ENCODE measurements at regions of chr3 and their contacts with region 1.

Region 1: GRCh38 chr3:47522082-47522987 is 8.8 kb upstream of the ELP6 start:
- DNase-seq: peak; percentile 71
- H3K4me3 Mint-ChIP-seq: no peak overlapping the region
- H3K27ac Mint-ChIP-seq: peak overlapping the region; percentile 55
- H3K4me1 Mint-ChIP-seq: peaks cover 11% of the 10 kb centered on the region
- H3K27me3 Mint-ChIP-seq: no peaks in the 10 kb centered on the region

Region 2: GRCh38 chr3:47594792-47595191 is 72.5 kb after region 1 on chr3:
- intact Hi-C with region 1: no loop called
- DNase-seq: no peak
- H3K4me3 Mint-ChIP-seq: no peak overlapping the region
- H3K27ac Mint-ChIP-seq: no peak overlapping the region
- H3K4me1 Mint-ChIP-seq: no peaks in the 10 kb centered on the region
- H3K27me3 Mint-ChIP-seq: no peaks in the 10 kb centered on the region

Region 3: DNA sequence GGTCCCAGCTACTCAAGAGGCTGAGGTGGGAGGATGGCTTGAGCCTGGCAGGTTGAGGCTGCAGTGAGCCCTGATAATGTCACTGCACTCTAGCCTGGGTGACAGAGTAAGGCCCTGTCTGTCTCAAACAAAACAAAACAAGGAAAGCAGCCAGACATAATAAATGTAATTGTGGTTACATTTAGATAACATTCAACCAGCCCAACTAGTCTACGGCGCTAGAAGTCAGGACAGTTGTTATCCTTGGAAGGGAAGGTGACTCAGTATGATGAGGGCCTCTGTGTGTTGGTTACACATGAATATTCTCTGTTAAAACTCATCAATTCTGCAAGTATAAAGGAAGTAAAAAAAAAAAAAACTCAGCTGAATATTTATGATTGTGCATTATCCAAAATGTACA is 83.3 kb after region 1 on chr3:
- intact Hi-C with region 1: no loop called
- DNase-seq: no peak
- H3K4me3 Mint-ChIP-seq: no peak overlapping the region
- H3K27ac Mint-ChIP-seq: no peak overlapping the region
- H3K4me1 Mint-ChIP-seq: peaks cover 5% of the 10 kb centered on the region
- H3K27me3 Mint-ChIP-seq: no peaks in the 10 kb centered on the region

Region 4: DNA sequence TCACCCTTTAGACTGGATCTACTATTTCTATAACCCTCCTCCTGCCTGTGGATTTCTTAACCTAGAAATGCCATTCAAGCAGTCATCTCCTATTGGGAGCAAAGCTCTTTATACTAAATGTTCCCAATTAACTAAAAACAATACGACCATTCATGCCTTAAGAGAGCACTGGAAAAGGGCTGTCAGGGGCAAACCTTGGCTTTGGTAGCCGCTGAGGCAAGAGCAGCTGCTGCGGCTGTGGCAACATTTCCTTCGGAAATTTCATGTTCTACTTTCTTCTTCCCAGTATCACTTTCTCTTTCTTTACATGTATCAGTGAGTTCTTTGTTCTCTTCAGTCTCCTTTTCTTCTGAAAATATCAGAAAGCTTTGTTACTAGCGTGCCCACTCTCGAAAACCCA is 112.7 kb after region 1 on chr3:
- intact Hi-C with region 1: loop called (anchors 10 kb)
- DNase-seq: no peak
- H3K4me3 Mint-ChIP-seq: no peak overlapping the region
- H3K27ac Mint-ChIP-seq: no peak overlapping the region
- H3K4me1 Mint-ChIP-seq: no peaks in the 10 kb centered on the region
- H3K27me3 Mint-ChIP-seq: no peaks in the 10 kb centered on the region

Region 5: GRCh38 chr3:47645570-47645969 is 123.2 kb after region 1 on chr3:
- intact Hi-C with region 1: no loop called
- DNase-seq: no peak
- H3K4me3 Mint-ChIP-seq: no peak overlapping the region
- H3K27ac Mint-ChIP-seq: no peak overlapping the region
- H3K4me1 Mint-ChIP-seq: no peaks in the 10 kb centered on the region
- H3K27me3 Mint-ChIP-seq: no peaks in the 10 kb centered on the region

Region 6: GRCh38 chr3:47791193-47791855 is 269.0 kb after region 1 on chr3:
- intact Hi-C with region 1: loop called (anchors 1 kb)
- DNase-seq: no peak
- H3K4me3 Mint-ChIP-seq: no peak overlapping the region
- H3K27ac Mint-ChIP-seq: no peak overlapping the region
- H3K4me1 Mint-ChIP-seq: no peaks in the 10 kb centered on the region
- H3K27me3 Mint-ChIP-seq: no peaks in the 10 kb centered on the region

Region 7: DNA sequence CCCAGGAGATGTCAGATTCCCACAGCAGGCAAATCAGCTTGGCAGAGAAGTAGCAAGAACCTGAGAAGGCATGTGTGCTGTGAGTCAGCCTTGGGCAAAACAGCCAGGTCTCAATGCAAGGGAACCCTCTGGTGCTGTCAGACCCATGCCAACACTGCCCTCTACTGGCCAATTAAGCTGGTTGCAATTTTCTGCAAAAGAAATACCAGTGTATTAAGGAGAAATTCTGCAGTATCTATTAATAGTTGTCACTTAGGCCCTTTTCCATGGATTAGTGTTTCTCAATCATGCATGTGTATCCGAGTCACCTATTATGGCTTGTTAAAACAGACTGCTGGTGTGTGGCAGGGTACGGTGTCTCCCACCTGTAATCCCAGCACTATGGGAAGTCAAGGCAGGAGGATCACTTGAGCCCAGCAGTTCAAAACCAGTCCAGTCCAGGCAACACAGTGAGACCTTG is 467.7 kb after region 1 on chr3:
- intact Hi-C with region 1: loop called (anchors 1 kb)
- DNase-seq: peak; percentile 54
- H3K4me3 Mint-ChIP-seq: no peak overlapping the region
- H3K27ac Mint-ChIP-seq: no peak overlapping the region
- H3K4me1 Mint-ChIP-seq: peaks cover 11% of the 10 kb centered on the region
- H3K27me3 Mint-ChIP-seq: no peaks in the 10 kb centered on the region

Measured in activated T-helper 1 cell treated with anti-CD3 and anti-CD28 coated beads, Interleukin-12 subunit alpha, Interleukin-12 subunit beta, Interleukin-2, Interleukin-4 antibody, amounts not matched to agents 30 ng/mL and 10 ng/mL and 1 ng/mL, durations not matched to agents 14 hours and 24 hours and 36 hours (primary cell).